CD4-positive, alpha-beta memory T cell (primary cell): ENCODE measurements at regions of chr20 and their contacts with region 1.

Region 1: DNA sequence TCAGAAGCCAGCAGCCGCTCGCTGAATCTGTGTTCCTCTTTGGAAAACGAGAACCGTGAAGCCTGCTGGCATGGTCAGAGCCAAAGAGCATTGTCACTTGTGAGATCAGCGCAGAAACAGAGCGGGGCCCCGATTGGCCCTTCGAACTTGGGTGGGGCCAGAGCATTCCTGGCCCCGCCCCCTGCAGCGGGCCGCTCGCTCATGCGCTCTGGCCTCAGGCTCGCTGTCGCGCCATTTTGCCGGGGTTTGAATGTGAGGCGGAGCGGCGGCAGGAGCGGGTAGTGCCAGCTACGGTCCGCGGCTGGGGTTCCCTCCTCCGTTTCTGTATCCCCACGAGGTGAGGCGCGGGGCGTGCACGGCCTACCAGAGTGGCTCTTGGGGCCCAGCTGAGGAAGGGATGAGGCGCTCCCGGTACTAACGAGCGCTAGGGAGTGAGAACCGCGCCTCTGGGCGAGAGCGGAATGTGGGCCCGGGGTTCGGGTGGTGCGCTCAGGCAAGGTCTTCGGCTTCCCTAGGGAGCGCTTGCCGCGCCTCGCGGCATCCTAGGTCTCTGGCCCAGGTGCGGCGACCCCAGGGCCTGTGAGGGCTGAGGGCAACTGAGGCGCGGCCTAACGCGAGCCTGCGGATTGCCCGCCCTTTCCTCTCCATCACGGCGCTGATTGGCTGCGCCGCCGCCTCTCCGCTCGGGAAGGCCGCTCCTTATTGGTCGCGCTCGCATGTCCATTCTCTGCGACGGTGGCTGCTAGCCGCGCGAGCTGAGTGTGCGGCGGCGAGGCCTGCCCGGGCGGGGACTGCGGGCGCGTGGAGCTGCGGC is at the start of gene CSE1L:
- DNase-seq: peak; percentile 93 to 97 (median 94)
- H3K4me3 ChIP-seq: peak within 1 kb of the TSS; percentile 99 to 100
- H3K4me3 Mint-ChIP-seq: peak within 1 kb of the TSS; percentile 97 to 99 (median 98)
- H3K27ac ChIP-seq: peak within 1 kb of the TSS; percentile 87
- H3K27ac Mint-ChIP-seq: peak within 1 kb of the TSS; percentile 98 to 99 (median 99)
- H3K4me1 ChIP-seq: peaks cover 40% of the 10 kb centered on the region
- H3K4me1 Mint-ChIP-seq: peaks cover 24 to 49% (median 38%) of the 10 kb centered on the region in 4 donors
- H3K27me3 ChIP-seq: no peaks in the 10 kb centered on the region
- H3K27me3 Mint-ChIP-seq: no peaks in the 10 kb centered on the region
- total RNA-seq, gene CSE1L: 44.5 to 45.8 TPM

Region 2: GRCh38 chr20:48921151-48921898 is 125.0 kb before region 1 on chr20 and contains the start of gene ARFGEF2:
- CTCF ChIA-PET with region 1: no interaction called
- POLR2A ChIA-PET with region 1: interaction called, 7 read pairs
- intact Hi-C with region 1: loop called (anchors 1 kb)
- DNase-seq: peak; percentile 87 to 94 (median 88)
- H3K4me3 ChIP-seq: peak within 1 kb of the TSS; percentile 87 to 91
- H3K4me3 Mint-ChIP-seq: peak within 1 kb of the TSS; percentile 94 to 100 (median 96)
- H3K27ac ChIP-seq: peak within 1 kb of the TSS; percentile 93
- H3K27ac Mint-ChIP-seq: peak within 1 kb of the TSS; percentile 96 to 100 (median 98)
- H3K4me1 ChIP-seq: peaks cover 32% of the 10 kb centered on the region
- H3K4me1 Mint-ChIP-seq: peaks cover 29 to 56% (median 41%) of the 10 kb centered on the region in 4 donors
- H3K27me3 ChIP-seq: no peaks in the 10 kb centered on the region
- H3K27me3 Mint-ChIP-seq: no peaks in the 10 kb centered on the region
- total RNA-seq, gene ARFGEF2: 27.3 to 28.1 TPM